AG04450 (cell line): ENCODE measurements at regions of chrX and their contacts with region 1.

Region 1: DNA sequence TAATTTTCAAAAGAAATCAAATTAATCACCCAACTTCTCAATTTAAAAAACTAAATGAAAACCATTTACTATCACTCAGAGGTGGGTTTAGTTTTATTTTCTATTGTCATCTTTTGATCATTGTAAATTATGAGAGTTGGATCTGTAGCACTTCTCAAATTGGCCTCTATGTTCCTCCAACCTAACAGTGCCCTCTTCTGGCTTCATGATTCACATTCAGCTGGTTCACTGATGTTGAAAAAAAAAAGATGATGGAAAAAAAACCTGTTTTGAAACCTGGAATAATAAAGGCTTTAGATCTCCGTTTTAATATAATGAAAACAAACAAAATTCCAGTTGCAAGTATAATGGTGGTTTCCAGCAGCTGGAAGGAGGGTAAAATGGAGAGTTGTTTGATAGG is 2.4 kb upstream of the NBDY start:
- DNase-seq: peak; percentile 6
- H3K4me3 ChIP-seq: no peak overlapping the region
- H3K27ac ChIP-seq: no peak overlapping the region
- H3K27me3 ChIP-seq: no peaks in the 10 kb centered on the region
- CTCF ChIP-seq: peak; percentile 62

Region 2: GRCh38 chrX:56281789-56282188 is 444.8 kb before region 1 on chrX:
- CTCF ChIA-PET with region 1: interaction called, 34 read pairs
- POLR2A ChIA-PET with region 1: no interaction called
- DNase-seq: no peak
- H3K4me3 ChIP-seq: no peak overlapping the region
- H3K27ac ChIP-seq: no peak overlapping the region
- H3K27me3 ChIP-seq: no peaks in the 10 kb centered on the region
- CTCF ChIP-seq: peak; percentile 23

Region 3: GRCh38 chrX:56314334-56314733 is 412.3 kb before region 1 on chrX:
- CTCF ChIA-PET with region 1: no interaction called
- POLR2A ChIA-PET with region 1: no interaction called
- DNase-seq: no peak
- H3K4me3 ChIP-seq: no peak overlapping the region
- H3K27ac ChIP-seq: no peak overlapping the region
- H3K27me3 ChIP-seq: no peaks in the 10 kb centered on the region
- CTCF ChIP-seq: no peak